Activated naive CD4-positive, alpha-beta T cell treated with anti-CD3 and anti-CD28 coated beads for 36 hours (primary cell): ENCODE measurements at regions of chr9 and their contacts with region 1.

Region 1: GRCh38 chr9:36728651-36729520 is 156.2 kb downstream of the MELK start:
- DNase-seq: peak; percentile 83
- H3K4me3 Mint-ChIP-seq: no peak overlapping the region
- H3K27ac Mint-ChIP-seq: no peak overlapping the region
- H3K4me1 Mint-ChIP-seq: no peaks in the 10 kb centered on the region
- H3K27me3 Mint-ChIP-seq: no peaks in the 10 kb centered on the region

Region 2: DNA sequence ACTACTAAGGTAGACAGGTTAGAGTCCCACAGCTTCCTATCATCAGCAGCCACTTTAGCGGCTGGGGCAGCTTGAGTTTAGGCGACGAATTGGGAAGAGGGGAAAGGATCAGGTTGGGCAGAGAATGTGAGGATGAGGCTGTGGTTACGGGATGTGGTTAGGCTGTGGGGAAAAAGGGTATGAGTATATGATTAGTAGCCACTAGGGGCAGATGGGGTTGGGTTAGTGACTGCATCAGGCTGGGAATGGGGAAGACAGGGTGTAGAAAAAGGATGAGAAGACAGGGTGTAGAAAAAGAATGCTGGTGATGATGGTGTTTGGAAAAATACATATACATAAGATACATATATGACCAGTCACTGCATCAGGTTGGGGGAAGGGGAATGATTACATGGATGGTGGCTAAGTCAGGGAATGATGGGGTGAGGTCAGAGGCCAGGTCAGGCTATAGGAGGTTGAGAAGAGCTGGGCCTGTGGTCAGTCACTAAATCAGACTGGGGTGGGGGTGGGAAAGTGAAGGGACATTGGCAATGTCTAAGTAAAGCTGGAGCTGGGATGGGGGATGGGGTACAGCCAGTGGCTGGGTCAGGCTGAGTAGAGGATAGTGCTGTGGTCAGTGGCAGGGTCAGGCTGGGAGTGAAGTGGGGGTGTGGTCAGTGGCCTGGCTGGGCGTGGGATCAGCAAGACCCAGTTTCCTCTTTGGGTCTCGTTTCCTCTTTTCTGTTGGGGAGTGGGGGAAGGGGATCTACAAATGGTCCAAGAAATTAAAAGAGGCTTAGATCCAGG is 999.0 kb before region 1 on chr9:
- CTCF ChIA-PET with region 1: no interaction called
- intact Hi-C with region 1: no loop called
- DNase-seq: peak; percentile 65
- H3K4me3 Mint-ChIP-seq: peak overlapping the region; percentile 84
- H3K27ac Mint-ChIP-seq: peak overlapping the region; percentile 56
- H3K4me1 Mint-ChIP-seq: peaks cover 16% of the 10 kb centered on the region
- H3K27me3 Mint-ChIP-seq: no peaks in the 10 kb centered on the region

Region 3: DNA sequence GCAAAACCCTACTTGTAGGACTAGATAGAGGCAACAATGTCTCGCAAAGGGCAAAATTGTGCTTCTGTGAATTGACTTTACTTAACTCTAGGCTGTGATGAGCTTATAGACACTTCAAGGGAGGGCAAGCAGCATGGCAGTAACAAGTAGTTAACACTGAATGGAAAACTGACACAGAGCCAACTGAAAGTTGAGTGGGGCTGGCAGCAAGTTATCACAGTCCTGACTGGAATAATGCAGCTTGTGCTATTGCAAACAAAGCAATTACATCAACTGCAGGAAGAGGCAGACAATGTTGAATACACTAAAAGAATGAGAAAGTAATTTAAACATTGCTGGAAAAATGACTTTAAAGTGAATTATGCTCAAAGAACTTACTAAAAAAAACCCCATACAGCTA is 391.0 kb before region 1 on chr9:
- CTCF ChIA-PET with region 1: interaction called, 3 read pairs
- intact Hi-C with region 1: loop called (anchors 10 kb)
- DNase-seq: no peak
- H3K4me3 Mint-ChIP-seq: no peak overlapping the region
- H3K27ac Mint-ChIP-seq: peak overlapping the region; percentile 15
- H3K4me1 Mint-ChIP-seq: peaks cover 8% of the 10 kb centered on the region
- H3K27me3 Mint-ChIP-seq: no peaks in the 10 kb centered on the region

Region 4: GRCh38 chr9:36632892-36633291 is 96.0 kb before region 1 on chr9:
- CTCF ChIA-PET with region 1: interaction called, 12 read pairs
- intact Hi-C with region 1: loop called (anchors 1 kb)
- DNase-seq: no peak
- H3K4me3 Mint-ChIP-seq: no peak overlapping the region
- H3K27ac Mint-ChIP-seq: no peak overlapping the region
- H3K4me1 Mint-ChIP-seq: no peaks in the 10 kb centered on the region
- H3K27me3 Mint-ChIP-seq: no peaks in the 10 kb centered on the region

Region 5: DNA sequence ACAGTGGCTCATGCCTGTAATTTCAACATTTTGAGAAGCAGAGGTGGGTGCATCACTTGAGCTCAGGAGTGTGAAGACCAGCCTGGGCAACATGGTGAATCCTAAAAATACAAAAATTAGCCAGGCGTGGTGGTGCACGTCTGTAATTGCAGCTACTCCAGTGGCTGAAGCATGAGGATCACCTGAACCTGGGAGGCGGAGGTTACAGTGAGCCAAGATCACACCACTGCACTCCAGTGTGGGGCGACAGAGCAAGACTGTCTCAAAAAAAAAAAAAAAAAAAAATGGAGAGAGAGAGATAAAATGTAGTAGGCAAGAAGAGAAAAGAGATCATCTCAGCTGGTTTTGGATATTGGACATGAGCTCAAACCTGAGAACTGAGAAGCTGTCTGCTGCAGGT is 367.7 kb after region 1 on chr9:
- CTCF ChIA-PET with region 1: no interaction called
- intact Hi-C with region 1: no loop called
- DNase-seq: no peak
- H3K4me3 Mint-ChIP-seq: no peak overlapping the region
- H3K27ac Mint-ChIP-seq: no peak overlapping the region
- H3K4me1 Mint-ChIP-seq: no peaks in the 10 kb centered on the region
- H3K27me3 Mint-ChIP-seq: no peaks in the 10 kb centered on the region